MCF 10A (cell line): ENCODE measurements at regions of chr4 and their contacts with region 1.

Region 1: GRCh38 chr4:48033825-48034413 is 17.3 kb downstream of the NIPAL1 start:
- DNase-seq: peak; percentile 50
- H3K4me3 Mint-ChIP-seq: no peak overlapping the region
- H3K27ac Mint-ChIP-seq: no peak overlapping the region
- H3K4me1 Mint-ChIP-seq: no peaks in the 10 kb centered on the region
- H3K27me3 Mint-ChIP-seq: no peaks in the 10 kb centered on the region
- CTCF ChIP-seq: peak; percentile 40

Region 2: GRCh38 chr4:48002267-48002666 is 31.7 kb before region 1 on chr4:
- CTCF ChIA-PET with region 1: interaction called, 24 read pairs
- POLR2A ChIA-PET with region 1: no interaction called
- intact Hi-C with region 1: no loop called
- DNase-seq: no peak
- H3K4me3 Mint-ChIP-seq: no peak overlapping the region
- H3K27ac Mint-ChIP-seq: no peak overlapping the region
- H3K4me1 Mint-ChIP-seq: no peaks in the 10 kb centered on the region
- H3K27me3 Mint-ChIP-seq: no peaks in the 10 kb centered on the region
- CTCF ChIP-seq: no peak

Region 3: DNA sequence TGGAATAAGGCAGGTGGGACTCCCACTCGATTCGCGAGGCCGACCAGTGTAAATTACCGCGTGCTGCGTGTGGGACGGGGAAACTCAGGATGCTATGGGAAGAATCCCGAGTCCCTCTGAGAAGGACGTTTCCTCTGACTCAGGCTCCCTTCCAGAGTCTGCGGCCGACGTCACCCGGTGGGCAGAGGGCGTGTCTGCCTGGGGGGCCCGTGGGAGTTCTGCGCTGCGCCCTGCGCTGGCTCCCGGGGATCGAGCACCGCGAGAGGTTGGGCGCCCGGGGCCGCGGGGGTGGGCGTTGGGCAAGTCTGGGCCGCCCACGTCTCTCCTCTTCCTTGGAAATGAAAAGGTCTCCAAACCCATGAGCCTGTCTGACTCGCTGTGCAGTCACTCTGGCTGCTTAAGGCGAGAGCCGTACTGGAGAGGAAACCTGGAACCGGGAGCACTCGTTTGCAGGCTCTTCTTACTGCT is 16.8 kb before region 1 on chr4:
- CTCF ChIA-PET with region 1: interaction called, 22 read pairs
- POLR2A ChIA-PET with region 1: interaction called, 8 read pairs
- intact Hi-C with region 1: no loop called
- DNase-seq: peak; percentile 83
- H3K4me3 Mint-ChIP-seq: peak overlapping the region; percentile 86
- H3K27ac Mint-ChIP-seq: peak overlapping the region; percentile 63
- H3K4me1 Mint-ChIP-seq: peaks cover 5% of the 10 kb centered on the region
- H3K27me3 Mint-ChIP-seq: no peaks in the 10 kb centered on the region
- CTCF ChIP-seq: no peak

Region 4: GRCh38 chr4:48047421-48047844 is 13.5 kb after region 1 on chr4:
- CTCF ChIA-PET with region 1: interaction called, 26 read pairs
- POLR2A ChIA-PET with region 1: interaction called, 3 read pairs
- intact Hi-C with region 1: no loop called
- DNase-seq: no peak
- H3K4me3 Mint-ChIP-seq: no peak overlapping the region
- H3K27ac Mint-ChIP-seq: no peak overlapping the region
- H3K4me1 Mint-ChIP-seq: no peaks in the 10 kb centered on the region
- H3K27me3 Mint-ChIP-seq: no peaks in the 10 kb centered on the region
- CTCF ChIP-seq: no peak

Region 5: DNA sequence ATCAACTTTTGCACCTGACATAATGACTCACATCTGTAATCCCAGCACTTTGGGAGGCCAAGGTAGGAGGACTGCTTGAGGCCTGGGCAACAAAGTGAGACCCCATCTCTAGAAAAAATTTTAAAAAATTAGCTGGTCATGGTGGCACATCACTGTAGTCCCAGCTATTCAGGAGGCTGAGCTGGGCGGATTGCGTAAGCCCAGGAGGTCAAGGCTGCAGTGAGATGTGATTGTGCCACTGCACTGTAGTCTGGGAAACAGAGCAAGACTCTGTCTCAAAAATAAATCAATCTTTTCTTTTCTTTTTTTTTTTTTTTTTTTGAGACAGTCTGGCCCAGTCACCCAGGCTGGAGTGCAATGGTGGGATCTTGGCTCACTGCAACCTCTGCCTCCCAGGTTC is 35.1 kb after region 1 on chr4:
- CTCF ChIA-PET with region 1: interaction called, 13 read pairs
- POLR2A ChIA-PET with region 1: no interaction called
- intact Hi-C with region 1: no loop called
- DNase-seq: no peak
- H3K4me3 Mint-ChIP-seq: no peak overlapping the region
- H3K27ac Mint-ChIP-seq: no peak overlapping the region
- H3K4me1 Mint-ChIP-seq: no peaks in the 10 kb centered on the region
- H3K27me3 Mint-ChIP-seq: no peaks in the 10 kb centered on the region
- CTCF ChIP-seq: no peak

Region 6: DNA sequence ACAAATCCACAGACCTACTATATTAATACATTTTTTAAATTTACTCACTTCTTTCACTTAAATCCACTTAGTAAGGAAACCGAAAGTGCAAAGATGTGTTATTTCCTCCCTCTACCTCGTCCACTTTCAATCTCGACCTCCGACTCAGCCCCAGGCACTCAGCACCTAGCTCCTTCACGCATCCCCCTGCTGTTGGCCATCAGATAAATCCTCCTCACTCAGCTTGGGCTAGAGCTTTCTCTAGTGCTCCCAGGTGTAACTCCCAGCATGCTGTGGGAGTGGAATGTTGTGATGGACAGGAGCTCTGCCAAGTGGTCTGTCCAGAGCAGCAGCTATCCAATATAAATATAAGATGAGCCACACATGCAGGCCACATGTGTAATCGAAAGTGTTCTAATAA is 262.4 kb after region 1 on chr4:
- CTCF ChIA-PET with region 1: no interaction called
- POLR2A ChIA-PET with region 1: no interaction called
- intact Hi-C with region 1: no loop called
- DNase-seq: no peak
- H3K4me3 Mint-ChIP-seq: no peak overlapping the region
- H3K27ac Mint-ChIP-seq: no peak overlapping the region
- H3K4me1 Mint-ChIP-seq: peaks cover 5% of the 10 kb centered on the region
- H3K27me3 Mint-ChIP-seq: no peaks in the 10 kb centered on the region
- CTCF ChIP-seq: no peak